Heart right ventricle (tissue), 16 donors: ENCODE measurements at regions of chr1 and their contacts with region 1.

Region 1: GRCh38 chr1:7667625-7668218 is 103.4 kb upstream of the VAMP3 start:
- DNase-seq: peak; percentile 86 to 92
- ATAC-seq: peak; percentile 69 to 89 (median 83)
- H3K4me3 ChIP-seq: no peak overlapping the region
- H3K27ac ChIP-seq: no peak overlapping the region
- H3K4me1 ChIP-seq: peaks cover 6 to 20% (median 10%) of the 10 kb centered on the region in 9 donors
- H3K27me3 ChIP-seq: peaks cover 0 to 6% (median 0%) of the 10 kb centered on the region in 7 donors
- CTCF ChIP-seq: peak; percentile 98 to 100 (median 99)

Region 2: DNA sequence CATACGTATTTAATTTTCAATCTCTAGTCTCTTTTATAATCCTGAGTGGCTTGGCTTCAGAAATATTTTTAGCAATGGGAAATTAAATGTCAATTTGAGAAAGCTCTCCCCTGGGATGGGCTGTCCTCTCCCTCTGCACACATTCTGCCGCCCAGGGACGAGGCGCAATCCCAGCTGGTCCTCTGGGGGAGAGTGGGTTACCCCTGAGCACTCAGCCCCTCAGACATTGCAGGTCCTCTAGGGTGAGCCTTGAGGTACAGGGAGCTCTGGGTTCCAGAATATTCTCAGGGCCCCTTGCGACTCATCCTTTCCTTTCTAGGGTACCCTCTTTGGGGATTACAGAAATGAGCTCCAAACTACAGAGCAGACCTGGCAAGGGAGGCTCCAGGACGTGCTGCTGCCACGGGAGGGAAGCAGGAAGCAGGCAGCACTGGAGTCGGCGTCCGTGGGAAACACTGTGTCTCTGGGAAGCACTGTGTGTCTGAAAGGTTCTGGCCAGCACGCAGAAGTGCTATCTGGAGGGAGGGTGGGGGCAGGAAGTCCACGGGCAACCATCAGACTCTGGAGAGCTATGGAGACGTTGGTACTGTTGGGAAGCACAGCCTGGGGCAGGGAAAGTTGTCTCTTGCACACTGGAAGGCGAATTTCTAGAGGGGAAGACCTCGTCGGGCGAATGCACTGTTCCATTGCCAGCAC is 240.0 kb before region 1 on chr1:
- intact Hi-C with region 1: no loop called
- DNase-seq: no peak
- ATAC-seq: peak in 2 of 8 donors; percentile 16 to 27
- H3K4me3 ChIP-seq: no peak overlapping the region
- H3K27ac ChIP-seq: no peak overlapping the region
- H3K4me1 ChIP-seq: no peaks in the 10 kb centered on the region
- H3K27me3 ChIP-seq: peaks cover 0 to 4% (median 0%) of the 10 kb centered on the region in 7 donors
- CTCF ChIP-seq: no peak

Region 3: GRCh38 chr1:7733276-7733675 is 65.6 kb after region 1 on chr1:
- intact Hi-C with region 1: loop called in 1 of 10 experiments (anchors 5 kb)
- DNase-seq: no peak
- ATAC-seq: no peak
- H3K4me3 ChIP-seq: no peak overlapping the region
- H3K27ac ChIP-seq: no peak overlapping the region
- H3K4me1 ChIP-seq: peaks cover 0 to 6% (median 0%) of the 10 kb centered on the region in 9 donors
- H3K27me3 ChIP-seq: no peaks in the 10 kb centered on the region
- CTCF ChIP-seq: no peak

Region 4: DNA sequence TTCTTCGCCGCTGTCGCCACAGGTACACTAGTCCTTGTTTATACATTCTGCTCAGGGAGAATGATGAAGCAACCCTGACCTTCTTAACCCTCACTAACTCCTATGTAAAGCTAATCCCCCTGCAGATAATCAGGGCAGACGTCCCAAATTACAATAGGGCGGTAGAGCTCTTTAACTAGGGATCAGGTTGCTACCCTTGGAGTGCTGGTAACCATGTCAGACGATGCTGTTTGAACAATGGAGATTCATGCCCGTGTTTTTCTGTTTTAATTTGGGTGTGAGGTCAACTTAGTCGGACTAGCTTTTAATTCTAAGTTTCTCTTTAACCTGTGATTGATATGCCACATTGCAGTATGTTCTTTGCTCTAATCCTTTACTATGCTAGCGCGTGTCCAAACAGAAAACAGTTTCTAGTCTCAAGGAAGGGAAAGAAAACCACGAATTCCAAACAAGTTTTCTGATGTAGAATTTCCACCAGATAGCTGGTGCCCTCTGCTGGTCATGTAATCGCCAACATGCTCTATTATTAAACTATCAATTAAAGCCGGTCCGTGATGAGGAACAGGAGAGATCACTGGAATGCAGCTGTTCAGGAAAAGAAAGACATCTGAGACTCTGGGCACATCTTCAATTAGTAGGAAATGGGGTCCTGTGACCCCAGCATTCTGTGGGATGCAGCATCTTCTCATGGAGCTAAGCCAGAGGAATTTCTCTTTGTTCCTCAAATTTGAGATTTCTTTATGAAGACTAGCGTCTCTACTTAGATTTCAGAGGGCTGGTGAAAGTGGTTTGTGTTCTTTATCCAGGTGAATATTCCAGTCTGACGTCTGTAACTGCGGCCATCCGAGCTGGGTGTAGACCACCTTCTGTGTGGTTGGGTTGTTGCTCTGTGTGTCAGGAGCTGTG is 85.0 kb after region 1 on chr1:
- intact Hi-C with region 1: loop called (anchors 1 to 2 kb)
- DNase-seq: peak in 1 of 2 donors; percentile 71
- ATAC-seq: peak; percentile 33 to 73 (median 56)
- H3K4me3 ChIP-seq: peak overlapping the region in 5 of 10 donors; percentile 3 to 29 (median 16)
- H3K27ac ChIP-seq: no peak overlapping the region
- H3K4me1 ChIP-seq: peaks cover 0 to 16% (median 0%) of the 10 kb centered on the region in 9 donors
- H3K27me3 ChIP-seq: no peaks in the 10 kb centered on the region
- CTCF ChIP-seq: peak; percentile 72 to 91 (median 84)

Region 5: DNA sequence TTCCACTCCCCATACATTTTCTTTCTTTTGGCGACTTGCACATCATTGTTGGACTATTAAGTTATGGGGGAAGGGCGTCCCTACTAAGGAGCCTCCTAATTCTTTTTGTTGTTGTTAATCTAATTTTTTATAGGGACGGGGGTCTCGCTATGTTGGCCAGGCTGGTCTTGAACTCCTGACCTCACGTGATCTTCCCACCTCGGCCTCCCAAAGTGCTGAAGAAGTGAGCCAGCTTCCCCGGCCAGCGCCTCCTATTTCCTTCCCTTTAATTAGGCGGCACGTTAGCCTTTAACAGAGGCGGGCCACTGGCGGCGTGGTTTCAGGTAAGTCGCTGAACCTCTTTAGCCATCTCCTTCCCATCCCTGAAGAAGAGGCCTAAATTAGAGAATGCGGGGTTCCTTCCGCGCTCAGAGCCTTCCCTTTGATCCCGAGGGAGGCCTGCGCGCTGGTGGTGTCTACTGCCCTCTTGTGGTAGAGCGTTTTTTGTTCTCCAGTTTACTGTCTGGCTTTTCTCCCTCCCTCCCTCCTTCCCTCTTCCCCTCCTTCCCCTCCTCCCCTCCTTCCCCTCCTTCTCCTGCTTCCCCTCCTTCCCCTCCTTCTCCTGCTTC is 234.9 kb after region 1 on chr1:
- intact Hi-C with region 1: loop called in 6 of 10 experiments (anchors 5 to 10 kb)
- DNase-seq: peak; percentile 36 to 71
- ATAC-seq: peak; percentile 50 to 91 (median 76)
- H3K4me3 ChIP-seq: peak overlapping the region in 5 of 10 donors; percentile 9 to 41 (median 36)
- H3K27ac ChIP-seq: no peak overlapping the region
- H3K4me1 ChIP-seq: peaks cover 0 to 4% (median 0%) of the 10 kb centered on the region in 9 donors
- H3K27me3 ChIP-seq: no peaks in the 10 kb centered on the region
- CTCF ChIP-seq: peak; percentile 50 to 76 (median 69)

Region 6: DNA sequence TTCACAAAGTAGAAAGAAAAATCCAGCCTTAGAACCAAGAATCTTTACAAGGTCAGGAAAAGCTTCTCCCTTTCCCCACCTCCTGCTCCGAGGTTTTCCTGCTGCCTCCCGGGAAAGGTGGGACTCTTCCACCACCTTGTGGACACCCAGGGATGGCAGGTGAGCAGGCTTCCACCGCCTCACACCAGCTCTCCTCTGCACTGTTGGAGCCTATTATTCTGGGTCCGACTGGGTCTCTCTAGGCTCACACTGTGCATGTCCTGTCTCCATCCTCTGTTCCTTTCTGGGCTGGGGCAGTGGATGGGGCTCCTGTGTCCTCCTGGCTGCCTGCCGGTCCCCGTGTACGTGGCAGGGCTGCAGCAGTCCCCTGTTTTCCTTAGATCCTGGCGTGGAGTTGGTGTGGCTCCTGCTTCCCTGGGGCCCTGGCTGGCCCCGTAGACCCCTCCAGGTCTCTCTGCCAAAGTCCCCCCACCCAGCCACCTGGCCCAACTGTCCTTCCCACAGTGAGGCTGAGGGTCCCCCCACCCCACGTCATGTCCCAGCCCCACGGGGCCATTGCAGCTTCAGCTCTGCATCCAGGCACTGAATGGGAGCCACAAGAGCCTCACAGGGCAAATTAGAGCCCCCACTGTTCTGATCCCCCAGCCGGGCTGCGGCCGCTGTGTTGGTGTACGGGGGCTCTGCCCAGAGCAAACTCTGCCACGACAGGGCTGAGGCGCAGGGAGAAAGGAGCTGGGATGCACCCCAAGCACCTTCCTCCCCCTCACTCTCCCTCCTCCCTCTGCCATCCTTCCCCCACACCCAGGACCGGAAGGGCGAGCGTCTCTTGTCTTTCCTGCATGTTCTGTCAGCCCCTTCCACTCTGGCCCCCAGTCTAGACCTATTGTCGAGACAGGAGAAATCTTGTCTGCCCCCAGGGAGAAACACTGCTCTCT is 646.9 kb after region 1 on chr1:
- intact Hi-C with region 1: loop called in 1 of 10 experiments (anchors 10 kb)
- DNase-seq: peak; percentile 68 to 69
- ATAC-seq: peak; percentile 68 to 85 (median 77)
- H3K4me3 ChIP-seq: no peak overlapping the region
- H3K27ac ChIP-seq: no peak overlapping the region
- H3K4me1 ChIP-seq: peaks cover 3 to 35% (median 16%) of the 10 kb centered on the region in 9 donors
- H3K27me3 ChIP-seq: peaks cover 0 to 48% (median 0%) of the 10 kb centered on the region in 7 donors
- CTCF ChIP-seq: peak; percentile 71 to 88 (median 84)